HepG2 (cell line): ENCODE measurements at regions of chr3 and their contacts with region 1.

Region 1: GRCh38 chr3:47849699-47850563 is 47.0 kb downstream of the DHX30 start:
- DNase-seq: peak; percentile 50
- ATAC-seq: peak; percentile 74
- H3K4me3 ChIP-seq: no peak overlapping the region
- H3K27ac ChIP-seq: no peak overlapping the region
- H3K4me1 ChIP-seq: no peaks in the 10 kb centered on the region
- H3K27me3 ChIP-seq: no peaks in the 10 kb centered on the region
- CTCF ChIP-seq: peak; percentile 44
- EP300 ChIP-seq: no peak
- POLR2A ChIP-seq: no peak; a peak in 2 of 4 replicates
- RAD21 ChIP-seq: no peak

Region 2: DNA sequence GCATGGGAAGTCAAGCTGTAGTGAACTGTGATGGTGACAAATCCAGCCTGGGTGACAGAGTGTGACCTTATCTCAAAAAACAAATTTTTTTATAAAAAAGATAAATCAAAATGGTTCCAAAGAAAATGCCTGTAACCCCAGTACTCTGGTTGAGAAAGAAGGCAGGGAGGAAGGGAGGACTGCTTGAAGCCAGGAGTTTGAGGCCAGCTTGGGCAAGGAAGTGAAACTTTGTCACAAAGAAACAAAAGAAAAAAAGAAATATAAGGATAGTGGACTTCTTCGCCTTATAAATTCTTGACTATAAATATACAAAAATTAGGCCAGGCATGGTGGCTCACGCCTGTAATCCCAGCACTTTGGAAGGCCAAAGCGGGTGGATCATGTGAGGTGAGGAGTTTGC is 102.4 kb before region 1 on chr3:
- CTCF ChIA-PET with region 1: no interaction called
- POLR2A ChIA-PET with region 1: no interaction called
- in situ Hi-C with region 1: no loop called
- intact Hi-C with region 1: no loop called
- DNase-seq: no peak
- ATAC-seq: no peak
- H3K4me3 ChIP-seq: no peak overlapping the region
- H3K27ac ChIP-seq: no peak overlapping the region
- H3K4me1 ChIP-seq: no peaks in the 10 kb centered on the region
- H3K27me3 ChIP-seq: no peaks in the 10 kb centered on the region
- CTCF ChIP-seq: no peak
- EP300 ChIP-seq: no peak
- POLR2A ChIP-seq: no peak
- RAD21 ChIP-seq: no peak

Region 3: GRCh38 chr3:47874913-47875312 is 25.0 kb after region 1 on chr3:
- CTCF ChIA-PET with region 1: no interaction called
- POLR2A ChIA-PET with region 1: no interaction called
- in situ Hi-C with region 1: no loop called
- intact Hi-C with region 1: no loop called
- DNase-seq: no peak
- ATAC-seq: no peak
- H3K4me3 ChIP-seq: no peak overlapping the region
- H3K27ac ChIP-seq: no peak overlapping the region
- H3K4me1 ChIP-seq: no peaks in the 10 kb centered on the region
- H3K27me3 ChIP-seq: no peaks in the 10 kb centered on the region
- CTCF ChIP-seq: no peak
- EP300 ChIP-seq: no peak
- POLR2A ChIP-seq: no peak
- RAD21 ChIP-seq: no peak

Region 4: DNA sequence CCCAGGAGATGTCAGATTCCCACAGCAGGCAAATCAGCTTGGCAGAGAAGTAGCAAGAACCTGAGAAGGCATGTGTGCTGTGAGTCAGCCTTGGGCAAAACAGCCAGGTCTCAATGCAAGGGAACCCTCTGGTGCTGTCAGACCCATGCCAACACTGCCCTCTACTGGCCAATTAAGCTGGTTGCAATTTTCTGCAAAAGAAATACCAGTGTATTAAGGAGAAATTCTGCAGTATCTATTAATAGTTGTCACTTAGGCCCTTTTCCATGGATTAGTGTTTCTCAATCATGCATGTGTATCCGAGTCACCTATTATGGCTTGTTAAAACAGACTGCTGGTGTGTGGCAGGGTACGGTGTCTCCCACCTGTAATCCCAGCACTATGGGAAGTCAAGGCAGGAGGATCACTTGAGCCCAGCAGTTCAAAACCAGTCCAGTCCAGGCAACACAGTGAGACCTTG is 140.1 kb after region 1 on chr3:
- CTCF ChIA-PET with region 1: interaction called, 4 read pairs
- POLR2A ChIA-PET with region 1: no interaction called
- in situ Hi-C with region 1: loop called (anchors 10 kb)
- intact Hi-C with region 1: loop called (anchors 2 kb)
- DNase-seq: peak; percentile 76
- ATAC-seq: peak; percentile 93
- H3K4me3 ChIP-seq: no peak overlapping the region
- H3K27ac ChIP-seq: no peak overlapping the region
- H3K4me1 ChIP-seq: no peaks in the 10 kb centered on the region
- H3K27me3 ChIP-seq: no peaks in the 10 kb centered on the region
- CTCF ChIP-seq: peak; percentile 91
- EP300 ChIP-seq: no peak
- POLR2A ChIP-seq: no peak
- RAD21 ChIP-seq: peak; percentile 90